ENCODE measurements at regions of chr9 and their contacts with region 1.

Region 1: DNA sequence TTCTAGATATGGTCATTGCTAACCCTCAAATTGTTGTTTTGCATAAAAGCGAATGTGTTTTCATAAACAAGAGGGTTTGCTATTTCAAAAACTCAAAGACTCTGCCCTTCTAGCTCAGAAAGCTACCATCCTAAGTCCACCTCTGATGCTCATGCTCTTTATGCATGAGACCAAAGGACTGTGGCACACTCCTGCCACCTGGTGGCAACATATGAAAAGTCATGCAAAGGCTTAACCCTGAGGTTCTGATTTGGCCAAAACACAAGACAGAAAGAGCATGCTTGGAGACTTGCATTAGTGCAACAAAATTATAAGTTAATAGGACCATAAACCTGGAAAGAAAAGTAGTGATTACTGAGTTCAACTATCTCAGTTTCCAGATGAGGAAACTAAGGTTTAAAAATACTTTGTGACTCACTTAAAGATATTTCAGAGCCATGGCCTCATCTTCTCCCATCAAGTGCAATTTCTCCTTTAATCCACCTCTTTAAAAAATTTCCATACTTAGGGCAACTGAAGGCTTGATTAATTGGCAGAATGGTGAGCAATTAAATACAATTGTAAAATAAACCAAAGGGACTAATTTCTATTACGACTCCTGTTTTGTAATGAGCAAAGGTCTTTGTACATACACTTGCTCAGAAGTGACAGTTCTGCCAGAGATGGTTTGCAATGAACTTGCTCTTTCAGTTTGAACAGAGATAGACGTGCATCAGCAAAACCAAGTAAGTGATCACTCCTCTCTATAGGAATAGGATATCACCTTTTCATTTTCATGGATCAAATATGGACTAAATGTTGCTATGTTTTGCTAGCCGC is 110.7 kb upstream of the RAD23B start:
- DNase-seq: peak; percentile 77
- H3K4me3 ChIP-seq: no peak overlapping the region
- H3K27ac ChIP-seq: no peak overlapping the region
- H3K4me1 ChIP-seq: no peaks in the 10 kb centered on the region
- H3K27me3 ChIP-seq: no peaks in the 10 kb centered on the region
- CTCF ChIP-seq: peak; percentile 69 to 74
- POLR2A ChIP-seq: no peak

Region 2: GRCh38 chr9:105835721-105836120 is 1336.6 kb before region 1 on chr9:
- CTCF ChIA-PET with region 1: interaction called, 137 read pairs
- POLR2A ChIA-PET with region 1: no interaction called
- dilution Hi-C with region 1: no loop called
- intact Hi-C with region 1: no loop called
- DNase-seq: no peak
- H3K4me3 ChIP-seq: no peak overlapping the region
- H3K27ac ChIP-seq: no peak overlapping the region
- H3K4me1 ChIP-seq: no peaks in the 10 kb centered on the region
- H3K27me3 ChIP-seq: no peaks in the 10 kb centered on the region
- CTCF ChIP-seq: no peak
- POLR2A ChIP-seq: no peak

Region 3: GRCh38 chr9:105842023-105842644 is 1330.2 kb before region 1 on chr9:
- CTCF ChIA-PET with region 1: interaction called, 137 read pairs
- POLR2A ChIA-PET with region 1: no interaction called
- dilution Hi-C with region 1: no loop called
- intact Hi-C with region 1: loop called (anchors 1 kb)
- DNase-seq: peak; percentile 41
- H3K4me3 ChIP-seq: no peak overlapping the region
- H3K27ac ChIP-seq: no peak overlapping the region
- H3K4me1 ChIP-seq: no peaks in the 10 kb centered on the region
- H3K27me3 ChIP-seq: no peaks in the 10 kb centered on the region
- CTCF ChIP-seq: peak; percentile 57 to 58
- POLR2A ChIP-seq: no peak

Region 4: DNA sequence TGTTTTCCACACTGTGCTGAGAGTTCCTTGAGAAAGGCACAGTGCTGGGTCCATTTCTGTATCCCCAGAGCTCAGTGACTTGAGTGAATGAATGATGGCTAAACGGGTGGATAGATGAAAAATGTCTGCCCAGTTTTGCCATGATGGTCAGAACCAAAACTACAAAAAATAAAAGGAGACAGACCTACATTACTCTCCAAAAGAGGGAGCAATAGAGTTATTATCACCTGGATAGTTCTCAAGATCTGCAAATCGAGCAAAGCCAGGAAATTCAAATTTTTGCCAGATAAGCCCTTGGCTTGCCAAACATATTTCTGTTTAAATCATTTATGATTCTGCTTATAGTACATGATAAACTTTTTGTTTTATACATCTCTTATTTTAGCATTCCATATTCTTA is 523.6 kb before region 1 on chr9:
- CTCF ChIA-PET with region 1: no interaction called
- POLR2A ChIA-PET with region 1: no interaction called
- dilution Hi-C with region 1: no loop called
- intact Hi-C with region 1: loop called (anchors 1 kb)
- DNase-seq: peak; percentile 1
- H3K4me3 ChIP-seq: no peak overlapping the region
- H3K27ac ChIP-seq: no peak overlapping the region
- H3K4me1 ChIP-seq: no peaks in the 10 kb centered on the region
- H3K27me3 ChIP-seq: no peaks in the 10 kb centered on the region
- CTCF ChIP-seq: no peak
- POLR2A ChIP-seq: no peak

Region 5: DNA sequence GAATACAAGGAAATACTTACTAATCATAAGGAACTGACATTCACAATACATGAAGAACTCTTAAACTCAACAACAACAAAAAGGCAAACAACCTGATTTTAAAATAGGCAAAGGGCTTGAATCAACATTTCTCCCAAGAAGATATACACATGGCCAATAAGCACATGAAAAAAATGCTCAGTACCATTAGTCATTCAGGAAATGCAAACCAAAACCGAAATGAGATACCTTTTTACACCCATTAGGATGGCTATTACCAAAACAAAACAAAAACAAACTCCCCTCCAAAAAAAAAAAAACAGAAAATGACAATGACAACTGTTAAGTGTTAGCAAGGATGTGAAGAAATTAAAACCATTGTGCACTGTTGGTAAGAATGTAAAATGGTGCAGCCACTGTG is 413.5 kb before region 1 on chr9:
- CTCF ChIA-PET with region 1: no interaction called
- POLR2A ChIA-PET with region 1: no interaction called
- dilution Hi-C with region 1: no loop called
- intact Hi-C with region 1: no loop called
- DNase-seq: no peak
- H3K4me3 ChIP-seq: no peak overlapping the region
- H3K27ac ChIP-seq: no peak overlapping the region
- H3K4me1 ChIP-seq: no peaks in the 10 kb centered on the region
- H3K27me3 ChIP-seq: no peaks in the 10 kb centered on the region
- CTCF ChIP-seq: no peak
- POLR2A ChIP-seq: no peak

Region 6: DNA sequence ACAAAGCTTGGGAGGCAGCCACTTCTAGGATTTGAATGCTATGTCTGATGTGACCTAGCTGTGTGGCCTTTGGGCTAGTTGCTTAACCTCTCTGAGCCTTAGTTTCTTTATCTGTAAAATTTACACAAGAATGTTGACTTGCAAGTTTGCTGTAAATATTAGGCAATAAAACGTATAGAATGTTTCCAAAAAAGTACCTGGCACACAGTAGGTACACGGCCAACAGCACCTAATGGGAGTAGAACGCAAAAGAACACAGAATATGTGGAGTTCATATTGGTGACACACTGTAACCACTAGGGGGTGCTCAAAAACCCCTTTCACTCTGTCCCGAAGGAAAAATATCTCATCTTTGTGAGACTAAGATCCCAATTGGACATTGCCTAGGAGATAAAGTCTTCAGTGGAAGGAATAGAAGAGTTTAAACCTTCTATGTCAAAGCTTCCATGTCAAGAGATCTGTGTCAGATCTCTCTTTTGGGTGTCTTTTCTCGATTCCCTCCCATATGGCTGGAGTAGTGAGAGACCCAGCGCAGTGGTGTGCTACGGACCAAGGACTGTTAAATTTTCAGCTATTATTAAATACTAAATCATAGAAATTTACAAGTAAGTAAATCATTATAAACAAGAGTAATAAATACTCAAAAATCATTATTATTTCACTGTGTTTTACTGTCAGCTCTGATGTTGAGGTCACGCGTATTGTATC is 34.7 kb before region 1 on chr9:
- CTCF ChIA-PET with region 1: interaction called, 5 read pairs
- POLR2A ChIA-PET with region 1: no interaction called
- dilution Hi-C with region 1: no loop called
- intact Hi-C with region 1: loop called (anchors 2 kb)
- DNase-seq: peak; percentile 17
- H3K4me3 ChIP-seq: no peak overlapping the region
- H3K27ac ChIP-seq: no peak overlapping the region
- H3K4me1 ChIP-seq: no peaks in the 10 kb centered on the region
- H3K27me3 ChIP-seq: no peaks in the 10 kb centered on the region
- CTCF ChIP-seq: peak; percentile 54 to 67
- POLR2A ChIP-seq: no peak

Region 7: GRCh38 chr9:107282753-107283625 is 110.6 kb after region 1 on chr9 and contains the start of gene RAD23B:
- CTCF ChIA-PET with region 1: no interaction called
- POLR2A ChIA-PET with region 1: no interaction called
- dilution Hi-C with region 1: no loop called
- intact Hi-C with region 1: no loop called
- DNase-seq: peak; percentile 99
- H3K4me3 ChIP-seq: peak within 1 kb of the TSS; percentile 54 to 93 (median 92)
- H3K27ac ChIP-seq: peak within 1 kb of the TSS; percentile 82
- H3K4me1 ChIP-seq: peaks cover 14% of the 10 kb centered on the region
- H3K27me3 ChIP-seq: no peaks in the 10 kb centered on the region
- CTCF ChIP-seq: no peak
- POLR2A ChIP-seq: peak; percentile 73
- total RNA-seq, gene RAD23B: 100 and 102 TPM in 2 replicates

Measured in endothelial cell of umbilical vein (primary cell).